CD8-positive, alpha-beta memory T cell (primary cell): ENCODE measurements at regions of chr1 and their contacts with region 1.

Region 1: GRCh38 chr1:100037927-100038659 is 68.3 kb downstream of the SLC35A3 start:
- DNase-seq: peak; percentile 86 to 91 (median 89)
- H3K4me3 ChIP-seq: peak overlapping the region; percentile 79
- H3K4me3 Mint-ChIP-seq: peak overlapping the region; percentile 94 to 99 (median 97)
- H3K27ac ChIP-seq: peak overlapping the region; percentile 98
- H3K27ac Mint-ChIP-seq: peak overlapping the region; percentile 96 to 100 (median 99)
- H3K4me1 ChIP-seq: peaks cover 47% of the 10 kb centered on the region
- H3K4me1 Mint-ChIP-seq: peaks cover 54 to 76% (median 68%) of the 10 kb centered on the region in 3 donors
- H3K27me3 ChIP-seq: no peaks in the 10 kb centered on the region
- H3K27me3 Mint-ChIP-seq: peaks cover 0 to 3% of the 10 kb centered on the region in 2 donors

Region 2: DNA sequence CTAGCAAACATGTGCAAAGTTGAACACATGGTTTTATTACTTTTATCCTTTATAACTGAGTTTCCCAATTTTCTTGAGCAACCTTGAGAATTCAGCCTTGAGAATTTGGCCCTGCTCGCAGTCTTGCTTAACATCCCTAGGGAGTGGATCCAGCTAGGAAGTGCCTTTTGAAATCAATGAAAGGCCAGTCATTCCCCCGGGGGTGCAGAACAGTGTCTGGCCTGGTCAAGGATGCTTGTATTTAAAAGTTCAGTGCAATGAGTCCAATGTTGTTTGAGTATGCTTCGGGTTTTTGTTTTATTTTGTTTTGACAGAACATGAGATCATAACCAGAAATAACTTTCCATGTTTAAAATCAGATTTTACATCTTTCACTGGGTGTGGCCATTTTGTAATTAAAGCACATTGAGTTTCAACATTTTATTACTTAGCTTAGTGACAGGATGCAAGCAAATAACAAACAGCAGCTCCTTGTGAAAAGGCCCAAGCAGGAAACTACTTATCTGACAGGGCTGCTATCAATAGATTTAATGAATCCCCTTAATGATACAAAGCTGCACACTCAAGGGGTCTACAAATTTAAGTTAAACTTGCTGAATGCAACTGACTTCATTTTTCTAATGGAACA is 375.4 kb before region 1 on chr1:
- CTCF ChIA-PET with region 1: no interaction called
- POLR2A ChIA-PET with region 1: no interaction called
- DNase-seq: no peak
- H3K4me3 ChIP-seq: no peak overlapping the region
- H3K4me3 Mint-ChIP-seq: no peak overlapping the region
- H3K27ac ChIP-seq: no peak overlapping the region
- H3K27ac Mint-ChIP-seq: no peak overlapping the region
- H3K4me1 ChIP-seq: no peaks in the 10 kb centered on the region
- H3K4me1 Mint-ChIP-seq: no peaks in the 10 kb centered on the region
- H3K27me3 ChIP-seq: no peaks in the 10 kb centered on the region
- H3K27me3 Mint-ChIP-seq: peaks cover 3 to 20% of the 10 kb centered on the region in 2 donors

Region 3: DNA sequence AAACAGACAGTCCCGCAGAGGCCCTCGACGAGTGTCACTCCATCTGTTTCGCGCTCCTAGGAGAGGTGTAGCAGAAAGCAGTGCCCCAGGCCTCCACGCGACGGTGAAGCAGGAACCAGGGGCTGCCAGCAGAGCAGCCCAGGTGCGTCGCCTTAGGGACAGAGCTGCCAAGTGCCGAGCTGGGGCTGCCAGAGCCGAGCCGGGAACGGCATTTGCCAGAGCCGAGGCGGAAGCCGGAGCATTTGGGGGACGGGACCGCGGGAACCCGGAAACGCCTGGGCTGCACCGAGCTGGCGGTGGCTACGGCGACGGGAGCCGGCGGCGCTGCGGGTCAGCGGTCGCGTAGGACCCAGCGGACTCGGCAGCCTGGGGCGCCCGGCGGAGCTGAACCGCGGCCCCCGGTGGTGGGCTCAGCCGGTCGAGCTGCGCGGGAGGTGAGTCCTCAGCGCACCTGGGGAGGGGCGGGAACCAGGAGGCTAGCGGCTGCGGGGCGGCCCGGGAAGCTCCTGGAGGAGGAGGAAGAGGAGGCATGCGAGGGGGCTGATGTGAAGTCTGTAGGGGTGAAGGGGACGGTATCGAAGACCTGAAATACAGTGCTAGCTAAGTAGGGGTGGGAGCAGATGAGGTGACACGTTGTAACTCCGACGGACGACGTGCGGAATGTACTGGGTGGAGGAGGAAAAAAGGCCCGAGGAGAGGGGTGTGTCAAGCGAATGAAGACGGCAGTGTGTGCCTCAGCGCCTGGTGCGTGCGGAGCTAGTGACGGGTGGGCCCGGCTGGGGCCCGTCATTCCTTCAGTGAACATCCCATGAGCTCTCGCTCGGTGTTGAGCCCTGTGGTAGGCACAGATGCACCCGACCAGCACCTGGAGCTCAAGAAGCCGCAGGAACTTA is 68.1 kb before region 1 on chr1 and contains the start of gene SLC35A3:
- CTCF ChIA-PET with region 1: interaction called, 6 read pairs
- POLR2A ChIA-PET with region 1: interaction called, 17 read pairs
- DNase-seq: peak; percentile 65 to 79 (median 75)
- H3K4me3 ChIP-seq: peak within 1 kb of the TSS; percentile 81
- H3K4me3 Mint-ChIP-seq: peak within 1 kb of the TSS; percentile 96 to 100 (median 100)
- H3K27ac ChIP-seq: peak within 1 kb of the TSS; percentile 72
- H3K27ac Mint-ChIP-seq: peak within 1 kb of the TSS; percentile 84 to 99 (median 98)
- H3K4me1 ChIP-seq: peaks cover 18% of the 10 kb centered on the region
- H3K4me1 Mint-ChIP-seq: peaks cover 37 to 47% (median 38%) of the 10 kb centered on the region in 3 donors
- H3K27me3 ChIP-seq: no peaks in the 10 kb centered on the region
- H3K27me3 Mint-ChIP-seq: peaks cover 0 to 1% of the 10 kb centered on the region in 2 donors
- total RNA-seq, gene SLC35A3: 16.6 to 17.0 TPM